Activated naive CD4-positive, alpha-beta T cell treated with anti-CD3 and anti-CD28 coated beads, Interleukin-2, amount 10 ng/mL, durations not matched to agents 7 days and 5 days (primary cell): ENCODE measurements at regions of chr11 and their contacts with region 1.

Region 1: DNA sequence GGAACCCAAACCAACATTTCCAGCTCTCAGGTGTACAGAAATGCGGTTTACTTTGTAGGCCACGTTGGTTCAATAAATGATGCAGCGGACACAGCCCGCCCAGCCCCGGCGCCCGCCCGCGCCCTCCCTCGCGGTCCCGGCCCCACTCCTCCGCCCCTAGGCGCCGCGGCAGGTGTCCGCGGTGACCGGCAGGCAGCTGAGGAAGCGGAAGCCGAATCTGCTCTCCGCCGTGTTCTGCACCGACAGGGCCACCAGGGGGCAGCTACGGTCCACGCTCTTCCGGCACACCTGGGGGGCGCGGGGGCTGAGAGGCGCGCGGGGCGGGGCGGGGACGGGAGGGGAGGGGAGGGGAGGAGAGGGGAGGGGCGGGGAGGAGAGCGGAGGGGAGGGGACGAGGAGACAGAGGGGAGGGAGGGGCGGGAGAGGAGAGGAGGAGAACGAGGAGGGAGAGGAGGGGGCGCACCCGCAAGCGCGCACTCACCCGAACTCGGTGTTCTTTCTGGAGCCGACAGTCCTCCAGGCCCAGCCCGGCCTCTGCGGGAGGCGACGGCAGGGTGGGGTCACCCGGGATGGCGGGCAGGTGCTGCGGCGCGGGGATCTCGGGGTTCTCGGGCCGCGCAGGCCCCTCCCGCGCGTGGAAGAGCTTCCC is 5.6 kb downstream of the LMNTD2 start:
- DNase-seq: peak; percentile 85
- H3K4me3 Mint-ChIP-seq: peak overlapping the region; percentile 52
- H3K27ac Mint-ChIP-seq: no peak overlapping the region
- H3K4me1 Mint-ChIP-seq: peaks cover 16% of the 10 kb centered on the region
- H3K27me3 Mint-ChIP-seq: peaks cover 64% of the 10 kb centered on the region

Region 2: DNA sequence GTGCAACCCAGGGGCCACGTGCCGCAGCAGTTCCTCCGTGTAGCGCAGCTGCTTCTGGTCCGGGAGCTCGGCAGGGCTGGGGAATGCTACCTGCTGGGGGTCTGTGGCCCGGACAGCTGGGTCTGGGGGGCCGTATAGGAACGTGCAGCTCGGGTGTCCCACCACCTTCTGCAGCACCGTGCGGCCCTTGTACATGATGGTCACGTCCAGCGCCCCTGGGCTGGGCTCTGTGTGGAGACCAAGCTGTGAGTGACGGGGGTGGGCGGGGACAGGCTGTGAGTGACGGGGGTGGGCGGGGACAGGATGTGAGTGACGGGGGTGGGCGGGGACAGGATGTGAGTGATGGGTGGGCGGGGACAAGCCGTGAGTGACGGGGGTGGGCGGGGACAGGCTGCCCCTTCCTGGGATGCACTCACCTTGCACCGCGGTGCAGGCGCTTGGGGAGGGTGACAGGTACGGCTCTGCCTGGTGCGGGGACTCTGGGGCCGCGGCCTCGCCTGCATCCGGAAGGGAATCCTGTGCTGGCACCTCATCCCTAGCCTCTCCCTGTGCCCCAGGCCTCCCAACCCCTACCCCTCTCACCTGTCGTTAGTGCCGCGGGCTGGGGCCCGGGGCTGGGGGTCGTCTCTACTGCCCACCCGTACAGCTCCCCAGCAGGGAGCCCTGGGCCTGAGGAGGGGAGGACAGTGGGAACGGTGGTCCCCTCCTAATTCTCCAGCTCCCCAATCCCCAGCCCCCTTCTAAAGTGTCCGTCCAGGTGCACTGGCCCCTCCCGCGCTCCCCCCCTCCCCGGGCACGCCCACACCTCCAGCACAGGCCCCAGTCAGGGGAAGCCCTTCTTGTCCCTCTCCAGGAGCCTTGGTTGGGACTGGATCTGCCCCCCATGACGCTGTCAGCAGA is 58.7 kb after region 1 on chr11:
- CTCF ChIA-PET with region 1: interaction called, 11 read pairs
- DNase-seq: peak; percentile 92
- H3K4me3 Mint-ChIP-seq: peak overlapping the region; percentile 89
- H3K27ac Mint-ChIP-seq: peak overlapping the region; percentile 96
- H3K4me1 Mint-ChIP-seq: peaks cover 24% of the 10 kb centered on the region
- H3K27me3 Mint-ChIP-seq: peaks cover 11% of the 10 kb centered on the region

Region 3: GRCh38 chr11:765025-765801 is 210.3 kb after region 1 on chr11:
- CTCF ChIA-PET with region 1: no interaction called
- DNase-seq: peak; percentile 82
- H3K4me3 Mint-ChIP-seq: no peak overlapping the region
- H3K27ac Mint-ChIP-seq: peak overlapping the region; percentile 58
- H3K4me1 Mint-ChIP-seq: no peaks in the 10 kb centered on the region
- H3K27me3 Mint-ChIP-seq: no peaks in the 10 kb centered on the region